Esophagus muscularis mucosa (tissue), 4 donors: ENCODE measurements at regions of chr2 and their contacts with region 1.

Region 1: DNA sequence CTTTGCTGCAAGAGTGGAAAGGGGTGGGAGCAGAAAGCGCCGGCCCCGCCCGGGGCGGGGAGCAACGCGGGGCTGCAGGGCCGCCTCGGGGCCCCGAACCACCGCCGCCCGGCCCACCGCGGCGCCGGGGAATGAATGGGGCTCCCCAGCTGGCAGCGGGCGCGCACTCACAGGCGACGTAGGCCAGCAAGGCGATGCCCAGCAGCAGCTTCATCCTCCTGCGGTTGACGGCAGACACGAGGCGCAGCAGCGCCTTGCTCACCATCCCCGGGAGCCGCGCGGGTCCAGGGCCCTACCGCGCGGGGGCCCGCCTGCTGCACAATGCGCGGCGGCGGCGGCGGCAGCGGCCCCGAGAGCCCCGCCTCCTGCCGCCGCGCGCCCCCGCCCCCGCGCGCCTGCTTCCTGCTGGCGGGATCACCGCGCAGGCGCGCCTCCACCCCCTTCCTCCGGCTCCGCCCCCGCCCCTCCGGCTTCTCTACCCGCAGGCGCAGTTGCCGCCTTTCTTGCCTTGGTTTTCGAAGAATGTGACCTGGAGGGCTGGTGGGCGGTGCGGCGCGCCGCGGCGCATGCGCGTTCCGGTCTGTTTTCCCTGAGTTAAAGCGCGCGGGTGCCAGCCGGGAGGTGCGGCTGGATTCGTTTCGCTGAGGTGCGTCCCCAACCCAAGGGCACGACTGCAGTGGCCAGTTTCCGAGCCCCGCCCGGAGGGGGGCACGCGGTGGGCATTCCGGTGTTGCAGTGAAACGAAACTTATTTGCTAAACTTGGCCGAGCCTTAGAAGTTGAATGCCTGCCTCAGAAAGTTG is at the start of gene UXS1:
- DNase-seq: peak; percentile 99
- H3K4me3 ChIP-seq: peak within 1 kb of the TSS; percentile 94 to 98 (median 98)
- H3K27ac ChIP-seq: peak within 1 kb of the TSS; percentile 86 to 94 (median 90)
- H3K4me1 ChIP-seq: peaks cover 11 to 49% (median 46%) of the 10 kb centered on the region in 4 donors
- H3K27me3 ChIP-seq: no peaks in the 10 kb centered on the region
- CTCF ChIP-seq: peak in 1 of 3 experiments; percentile 12
- EP300 ChIP-seq: no peak
- POLR2A ChIP-seq: no peak
- total RNA-seq, gene UXS1: 31.0 to 42.4 (median 36.8) TPM

Region 2: DNA sequence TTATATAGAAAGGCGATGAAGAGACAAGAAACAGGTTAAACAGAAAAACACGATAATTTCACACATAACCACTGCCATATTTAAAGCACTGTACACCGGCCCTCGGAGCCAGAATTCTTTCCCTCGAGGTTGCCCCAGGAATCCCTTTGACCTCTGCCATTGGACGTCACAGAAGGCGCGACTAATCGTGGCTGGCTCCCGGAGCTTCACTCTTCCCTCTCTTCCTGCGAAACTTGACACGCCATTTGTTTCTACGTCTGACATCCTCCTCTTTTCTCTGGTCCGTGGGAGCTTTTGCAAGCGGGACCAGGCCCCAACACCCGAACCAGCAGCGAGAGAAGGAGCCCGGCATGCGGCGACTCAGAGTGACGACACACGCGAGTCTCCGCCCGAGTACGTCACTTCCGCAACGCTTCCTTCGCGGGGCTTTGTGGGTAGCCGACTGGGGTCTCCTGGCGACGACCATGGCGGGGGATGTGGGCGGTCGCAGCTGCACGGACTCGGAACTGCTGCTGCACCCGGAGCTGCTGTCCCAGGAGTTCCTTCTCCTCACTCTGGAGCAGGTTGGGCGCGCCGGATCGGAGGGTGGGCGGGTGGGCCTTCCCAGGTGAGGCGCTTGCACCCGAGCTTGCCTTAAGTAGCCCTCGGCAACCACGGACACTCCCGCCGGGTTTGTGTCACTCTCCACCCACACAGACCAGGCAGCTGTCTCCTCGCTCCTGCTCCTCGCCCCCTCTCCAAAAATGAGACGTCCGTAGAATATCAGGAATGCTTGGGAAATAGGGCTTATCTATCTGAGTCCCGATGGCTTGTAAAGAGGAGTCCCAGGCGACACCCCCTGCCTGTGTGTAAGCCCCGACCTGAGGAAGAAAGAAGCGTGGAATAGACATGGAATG is 856.8 kb before region 1 on chr2 and contains the start of gene C2orf49:
- intact Hi-C with region 1: loop called (anchors 10 kb)
- DNase-seq: peak; percentile 97
- H3K4me3 ChIP-seq: peak within 1 kb of the TSS; percentile 79 to 93 (median 87)
- H3K27ac ChIP-seq: peak within 1 kb of the TSS; percentile 90 to 95 (median 92)
- H3K4me1 ChIP-seq: peaks cover 20 to 29% (median 26%) of the 10 kb centered on the region in 4 donors
- H3K27me3 ChIP-seq: no peaks in the 10 kb centered on the region
- CTCF ChIP-seq: no peak
- EP300 ChIP-seq: no peak
- POLR2A ChIP-seq: no peak
- total RNA-seq, gene C2orf49: 16.4 to 19.5 (median 17.7) TPM